Astrocyte of the cerebellum (primary cell): ENCODE measurements at regions of chr4 and their contacts with region 1.

Region 1: GRCh38 chr4:6640292-6641163 is at the start of gene MRFAP1:
- DNase-seq: peak; percentile 86
- H3K4me3 ChIP-seq: peak within 1 kb of the TSS; percentile 68
- CTCF ChIP-seq: no peak

Region 2: GRCh38 chr4:6601661-6602250 is 38.8 kb before region 1 on chr4:
- in situ Hi-C with region 1: loop called (anchors 5 kb)
- DNase-seq: no peak
- H3K4me3 ChIP-seq: no peak overlapping the region
- CTCF ChIP-seq: no peak

Region 3: DNA sequence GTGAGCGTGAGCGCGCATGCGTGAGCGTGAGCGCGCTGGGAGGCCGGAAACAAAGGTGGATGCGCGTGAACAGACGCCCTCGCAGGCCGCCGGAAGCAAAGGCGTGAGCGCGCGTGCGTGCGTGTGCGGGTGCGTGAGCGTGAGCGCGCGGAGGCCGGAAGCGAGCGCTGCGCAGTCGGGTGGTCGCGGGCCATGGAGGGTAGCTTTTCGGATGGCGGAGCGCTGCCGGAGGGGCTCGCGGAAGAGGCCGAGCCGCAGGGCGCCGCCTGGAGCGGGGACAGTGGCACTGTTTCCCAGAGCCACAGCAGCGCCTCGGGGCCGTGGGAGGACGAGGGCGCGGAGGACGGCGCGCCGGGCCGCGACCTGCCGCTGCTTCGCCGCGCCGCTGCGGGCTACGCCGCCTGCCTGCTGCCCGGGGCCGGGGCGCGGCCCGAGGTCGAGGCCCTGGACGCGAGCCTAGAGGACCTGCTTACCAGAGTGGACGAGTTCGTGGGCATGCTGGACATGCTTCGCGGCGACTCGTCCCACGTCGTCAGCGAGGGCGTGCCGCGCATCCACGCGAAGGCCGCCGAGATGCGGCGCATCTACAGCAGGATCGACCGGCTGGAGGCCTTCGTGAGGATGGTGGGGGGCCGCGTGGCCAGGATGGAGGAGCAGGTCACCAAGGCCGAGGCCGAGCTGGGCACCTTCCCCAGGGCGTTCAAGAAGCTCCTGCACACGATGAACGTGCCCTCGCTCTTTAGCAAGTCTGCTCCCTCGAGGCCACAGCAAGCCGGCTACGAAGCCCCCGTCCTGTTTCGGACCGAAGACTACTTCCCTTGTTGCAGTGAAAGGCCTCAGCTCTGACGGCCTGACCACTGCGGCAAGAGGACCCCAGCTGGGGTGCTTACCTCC is 75.7 kb after region 1 on chr4 and contains the start of gene BLOC1S4:
- in situ Hi-C with region 1: no loop called
- DNase-seq: peak; percentile 80
- H3K4me3 ChIP-seq: peak within 1 kb of the TSS; percentile 82
- CTCF ChIP-seq: no peak